ENCODE measurements at regions of chr1 and their contacts with region 1.

Region 1: DNA sequence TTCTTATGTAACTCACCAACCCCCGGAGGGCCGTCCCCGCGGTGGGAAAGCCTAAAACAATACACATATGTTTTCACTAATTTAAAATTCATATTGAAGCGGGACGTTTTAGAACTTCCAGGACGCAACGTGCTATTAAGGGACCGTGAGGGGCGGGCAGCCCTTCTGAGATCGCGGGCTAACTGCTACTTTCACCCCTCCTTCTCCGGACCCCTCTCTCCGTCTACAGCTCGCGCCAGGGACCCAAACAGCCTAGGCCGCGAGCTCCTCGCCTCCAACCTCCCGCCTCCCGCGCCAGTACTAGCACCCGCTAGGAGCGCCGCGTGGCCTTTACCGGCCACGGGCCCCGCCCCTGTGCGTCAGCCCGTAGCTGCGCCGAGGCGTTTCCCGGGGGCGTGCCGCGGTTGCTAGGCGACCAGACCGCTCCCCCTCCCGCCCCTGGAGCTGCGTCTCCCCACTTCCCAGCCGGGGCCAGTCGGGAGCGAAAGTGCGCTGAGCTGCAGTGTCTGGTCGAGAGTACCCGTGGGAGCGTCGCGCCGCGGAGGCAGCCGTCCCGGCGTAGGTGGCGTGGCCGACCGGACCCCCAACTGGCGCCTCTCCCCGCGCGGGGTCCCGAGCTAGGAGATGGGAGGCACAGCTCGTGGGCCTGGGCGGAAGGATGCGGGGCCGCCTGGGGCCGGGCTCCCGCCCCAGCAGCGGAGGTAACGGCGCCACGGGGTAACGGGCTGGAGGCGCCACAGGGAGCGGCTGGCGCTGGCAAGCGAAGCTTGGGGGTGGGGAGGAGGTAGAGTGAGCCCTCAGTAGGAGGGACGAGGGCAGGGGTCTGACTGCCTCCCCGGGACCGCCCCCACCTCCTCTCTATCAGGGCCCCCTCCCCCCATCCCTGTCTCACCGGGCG is at the start of gene DYRK3:
- DNase-seq: peak; percentile 95 to 97
- ATAC-seq: peak; percentile 97 to 99 (median 98)
- H3K4me3 ChIP-seq: peak within 1 kb of the TSS; percentile 97
- H3K27ac ChIP-seq: peak within 1 kb of the TSS; percentile 73
- H3K4me1 ChIP-seq: peaks cover 18% of the 10 kb centered on the region
- H3K27me3 ChIP-seq: no peaks in the 10 kb centered on the region
- CTCF ChIP-seq: peak; percentile 21
- total RNA-seq, gene DYRK3: 0.57 to 2.0 (median 1.4) TPM

Region 2: GRCh38 chr1:206658264-206658980 is 23.1 kb after region 1 on chr1:
- intact Hi-C with region 1: loop called in 1 of 2 experiments (anchors 1 kb)
- DNase-seq: peak; percentile 58 to 82
- ATAC-seq: peak; percentile 85 to 92 (median 88)
- H3K4me3 ChIP-seq: peak overlapping the region; percentile 51
- H3K27ac ChIP-seq: peak overlapping the region; percentile 87
- H3K4me1 ChIP-seq: peaks cover 36% of the 10 kb centered on the region
- H3K27me3 ChIP-seq: no peaks in the 10 kb centered on the region
- CTCF ChIP-seq: peak; percentile 90

Region 3: DNA sequence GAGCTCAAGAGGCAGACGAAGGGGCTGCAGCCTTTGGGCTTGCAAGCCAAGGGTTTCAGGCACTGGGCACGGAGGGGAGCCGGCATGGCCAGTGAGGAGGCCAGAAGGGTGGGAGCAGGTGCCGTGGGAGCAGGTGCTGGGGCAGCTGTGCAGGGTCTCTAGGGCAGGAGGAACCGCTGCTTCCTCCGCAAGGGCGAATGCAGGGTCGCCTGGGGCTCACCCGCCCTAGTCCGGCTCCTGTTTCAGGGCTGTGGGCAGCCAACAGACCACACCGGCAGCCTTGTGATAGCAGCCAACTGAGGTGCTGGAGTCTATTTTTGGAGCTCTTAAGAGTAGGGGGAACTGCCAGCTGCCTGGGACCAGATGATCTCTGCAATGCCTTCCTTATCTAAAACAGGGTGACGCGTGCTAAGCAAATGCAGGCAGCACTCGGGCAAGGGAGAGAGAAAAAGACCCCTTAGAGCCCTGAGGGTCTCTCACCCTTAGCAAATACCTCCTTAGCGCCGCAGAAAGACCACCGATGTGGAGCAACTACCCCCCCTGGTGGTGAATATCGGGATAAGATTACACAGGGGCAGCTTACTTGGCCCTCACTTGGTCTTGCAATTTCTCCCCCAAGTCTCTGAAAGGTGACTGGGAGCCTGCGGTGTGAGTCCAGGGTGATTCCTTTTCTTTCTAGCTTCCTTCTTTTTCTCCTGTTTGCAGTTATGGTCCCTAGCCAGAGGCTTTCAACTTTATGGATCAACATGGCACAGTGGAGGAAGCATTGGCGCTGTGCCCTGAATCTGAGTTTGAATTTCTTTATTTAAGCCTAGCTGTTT is 28.7 kb after region 1 on chr1:
- intact Hi-C with region 1: loop called in 1 of 2 experiments (anchors 2 kb)
- DNase-seq: peak; percentile 43 to 79
- ATAC-seq: peak; percentile 76 to 85 (median 80)
- H3K4me3 ChIP-seq: peak overlapping the region; percentile 43
- H3K27ac ChIP-seq: peak overlapping the region; percentile 87
- H3K4me1 ChIP-seq: peaks cover 37% of the 10 kb centered on the region
- H3K27me3 ChIP-seq: no peaks in the 10 kb centered on the region
- CTCF ChIP-seq: peak; percentile 89

Region 4: DNA sequence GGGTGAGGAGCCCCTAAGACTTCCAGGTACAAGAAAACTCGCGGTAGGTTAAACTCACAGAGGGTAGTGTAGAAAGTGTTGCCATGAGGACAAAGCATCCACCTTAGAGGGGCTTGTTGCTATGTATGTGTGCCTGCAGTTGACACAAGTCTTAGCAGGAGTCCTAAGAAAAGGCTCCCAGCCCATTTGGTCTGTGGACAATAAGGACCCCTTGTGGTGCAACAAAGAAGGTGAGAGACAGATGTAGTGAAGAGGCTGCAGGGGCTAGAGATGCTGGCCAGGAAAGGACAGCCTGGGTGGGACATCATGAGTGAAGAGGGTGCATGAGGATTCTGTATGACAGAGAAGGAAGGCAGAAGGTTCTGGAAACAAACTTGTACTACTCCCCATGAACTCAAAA is 173.3 kb after region 1 on chr1:
- intact Hi-C with region 1: loop called (anchors 2 to 5 kb)
- DNase-seq: no peak
- ATAC-seq: peak; percentile 49 to 86 (median 76)
- H3K4me3 ChIP-seq: no peak overlapping the region
- H3K27ac ChIP-seq: no peak overlapping the region
- H3K4me1 ChIP-seq: no peaks in the 10 kb centered on the region
- H3K27me3 ChIP-seq: no peaks in the 10 kb centered on the region
- CTCF ChIP-seq: peak; percentile 51

Region 5: GRCh38 chr1:206865013-206865671 is 229.8 kb after region 1 on chr1 and contains the start of gene IL20:
- intact Hi-C with region 1: loop called in 1 of 2 experiments (anchors 5 kb)
- DNase-seq: peak; percentile 84 to 91
- ATAC-seq: peak; percentile 86 to 96 (median 94)
- H3K4me3 ChIP-seq: no peak within 1 kb of the TSS
- H3K27ac ChIP-seq: no peak within 1 kb of the TSS
- H3K4me1 ChIP-seq: peaks cover 6% of the 10 kb centered on the region
- H3K27me3 ChIP-seq: peaks cover 0 to 5% (median 0%) of the 10 kb centered on the region in 3 donors
- CTCF ChIP-seq: peak; percentile 81
- total RNA-seq, gene IL20: 1.2 TPM in 1 of 4 donors, not detected in the others

Region 6: GRCh38 chr1:206982216-206982615 is 346.9 kb after region 1 on chr1:
- intact Hi-C with region 1: loop called (anchors 5 to 10 kb)
- DNase-seq: peak in 1 of 2 donors; percentile 19
- ATAC-seq: peak; percentile 61 to 89 (median 75)
- H3K4me3 ChIP-seq: no peak overlapping the region
- H3K27ac ChIP-seq: no peak overlapping the region
- H3K4me1 ChIP-seq: no peaks in the 10 kb centered on the region
- H3K27me3 ChIP-seq: peaks cover 0 to 3% (median 0%) of the 10 kb centered on the region in 3 donors
- CTCF ChIP-seq: peak; percentile 58

Region 7: DNA sequence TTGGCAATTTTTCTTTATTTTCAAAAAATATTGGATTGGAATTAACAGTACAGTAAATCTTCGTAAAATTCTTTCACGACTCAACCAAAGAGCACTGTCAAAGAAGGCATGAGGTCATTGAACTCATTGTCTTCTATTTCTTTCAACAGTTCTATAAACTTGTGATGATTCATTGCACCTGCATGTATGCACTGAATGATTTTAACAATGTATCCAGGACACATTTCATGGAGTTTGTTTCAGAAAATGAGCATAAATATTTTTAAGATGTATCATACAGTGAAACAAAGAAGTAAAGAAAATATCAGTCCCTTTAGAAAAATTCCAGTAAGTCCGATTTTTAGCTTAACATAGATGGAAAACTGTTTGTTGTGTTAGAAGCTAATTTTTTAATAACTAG is 1309.2 kb after region 1 on chr1:
- intact Hi-C with region 1: no loop called
- DNase-seq: no peak
- ATAC-seq: no peak
- H3K4me3 ChIP-seq: no peak overlapping the region
- H3K27ac ChIP-seq: no peak overlapping the region
- H3K4me1 ChIP-seq: peaks cover 4% of the 10 kb centered on the region
- H3K27me3 ChIP-seq: no peaks in the 10 kb centered on the region
- CTCF ChIP-seq: no peak